ENCODE measurements at regions of chr7 and their contacts with region 1.

Region 1: DNA sequence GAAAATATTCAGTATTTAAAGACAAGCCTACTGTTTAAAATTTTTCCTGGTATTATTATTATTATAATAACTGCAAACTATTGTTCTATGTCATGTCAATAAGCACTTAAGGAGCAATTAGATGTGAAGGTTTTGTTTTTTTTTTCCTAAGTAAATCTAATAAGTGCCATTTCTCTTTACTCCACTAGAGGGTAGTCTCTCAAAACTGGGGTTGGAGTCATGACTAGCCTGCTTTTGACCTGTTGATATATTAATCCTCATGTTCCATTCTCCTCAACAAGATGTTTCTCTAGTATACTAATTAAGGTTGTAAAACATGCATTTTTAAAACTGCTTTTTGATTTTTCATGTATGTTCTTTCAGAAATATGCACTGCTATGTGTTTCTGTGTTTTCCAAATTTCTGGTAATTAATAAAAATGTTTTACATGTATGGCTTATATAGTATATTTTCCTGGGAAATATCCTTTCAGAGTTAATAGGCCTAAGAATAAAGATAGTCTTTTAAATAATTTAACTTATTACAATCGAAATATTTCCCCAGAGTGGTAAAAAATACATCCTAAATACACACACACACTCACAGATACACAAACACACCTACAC is 1.0 kb upstream of the LRRN3 start:
- DNase-seq: no peak
- ATAC-seq: no peak
- H3K4me3 Mint-ChIP-seq: peak overlapping the region; percentile 95
- H3K27ac Mint-ChIP-seq: no peak overlapping the region
- H3K4me1 Mint-ChIP-seq: peaks cover 47% of the 10 kb centered on the region
- H3K27me3 Mint-ChIP-seq: no peaks in the 10 kb centered on the region

Region 2: DNA sequence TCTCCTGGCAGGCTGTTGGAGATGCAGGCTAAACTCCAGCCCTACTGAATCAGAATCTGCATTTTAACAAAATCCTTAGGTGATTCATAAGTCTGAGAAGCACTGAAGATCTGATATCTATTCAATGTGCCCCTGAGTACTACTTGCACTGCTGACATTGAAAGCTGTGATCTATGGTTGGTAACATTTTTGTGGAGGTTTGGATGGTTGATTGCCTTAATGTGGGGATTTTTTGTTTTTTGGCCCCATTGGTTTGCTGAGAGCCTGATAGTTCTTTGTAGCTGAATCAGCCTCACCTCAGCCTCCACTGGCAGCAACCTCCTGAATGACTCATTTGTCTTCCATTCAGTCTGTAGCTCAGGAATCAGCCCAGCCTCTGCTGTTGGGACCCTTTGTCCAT is 13.7 kb before region 1 on chr7:
- CTCF ChIA-PET with region 1: interaction called, 19 read pairs
- POLR2A ChIA-PET with region 1: interaction called, 106 read pairs
- DNase-seq: peak; percentile 54
- ATAC-seq: peak; percentile 61
- H3K4me3 Mint-ChIP-seq: no peak overlapping the region
- H3K27ac Mint-ChIP-seq: peak overlapping the region; percentile 53
- H3K4me1 Mint-ChIP-seq: peaks cover 73% of the 10 kb centered on the region
- H3K27me3 Mint-ChIP-seq: no peaks in the 10 kb centered on the region

Region 3: GRCh38 chr7:111159426-111159825 is 69.5 kb after region 1 on chr7:
- CTCF ChIA-PET with region 1: no interaction called
- POLR2A ChIA-PET with region 1: no interaction called
- DNase-seq: no peak
- ATAC-seq: no peak
- H3K4me3 Mint-ChIP-seq: no peak overlapping the region
- H3K27ac Mint-ChIP-seq: no peak overlapping the region
- H3K4me1 Mint-ChIP-seq: no peaks in the 10 kb centered on the region
- H3K27me3 Mint-ChIP-seq: no peaks in the 10 kb centered on the region

Measured in activated CD8-positive, alpha-beta T cell treated with anti-CD3 and anti-CD28 coated beads, Interleukin-2, amount 10 ng/mL, durations not matched to agents 7 days and 5 days (primary cell).